Aorta (tissue), 5 donors: ENCODE measurements at regions of chr14 and their contacts with region 1.

Region 1: DNA sequence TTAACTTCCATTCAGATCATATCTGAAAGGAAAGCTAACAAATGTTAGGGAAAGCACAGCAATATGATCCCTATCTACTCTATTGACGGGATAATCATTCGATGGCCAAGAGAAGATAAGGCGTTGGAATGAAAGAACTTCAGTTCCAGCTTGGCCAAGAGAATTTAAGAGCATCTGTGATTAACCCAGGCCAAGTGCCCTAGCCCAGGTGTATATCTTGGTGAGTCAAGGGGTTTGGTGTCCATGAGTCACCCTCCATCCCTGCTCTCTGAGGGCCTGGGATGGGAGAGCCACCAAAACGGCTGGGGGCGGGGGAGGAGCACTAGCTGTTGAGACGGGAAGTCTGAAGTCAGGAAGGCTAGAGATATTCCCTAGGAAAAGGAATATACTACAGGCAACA is 13.0 kb downstream of the TBPL2 start:
- DNase-seq: no peak
- ATAC-seq: no peak
- H3K4me3 ChIP-seq: no peak overlapping the region
- H3K27ac ChIP-seq: no peak overlapping the region
- H3K4me1 ChIP-seq: no peaks in the 10 kb centered on the region
- H3K27me3 ChIP-seq: no peaks in the 10 kb centered on the region

Region 2: GRCh38 chr14:55212634-55213033 is 214.8 kb before region 1 on chr14:
- intact Hi-C with region 1: loop called (anchors 10 kb)
- DNase-seq: no peak
- ATAC-seq: no peak
- H3K4me3 ChIP-seq: no peak overlapping the region
- H3K27ac ChIP-seq: no peak overlapping the region
- H3K4me1 ChIP-seq: no peaks in the 10 kb centered on the region
- H3K27me3 ChIP-seq: peaks cover 0 to 2% of the 10 kb centered on the region in 2 donors

Region 3: GRCh38 chr14:55245657-55246268 is 181.6 kb before region 1 on chr14:
- intact Hi-C with region 1: loop called (anchors 5 to 10 kb)
- DNase-seq: no peak
- ATAC-seq: no peak
- H3K4me3 ChIP-seq: no peak overlapping the region
- H3K27ac ChIP-seq: no peak overlapping the region
- H3K4me1 ChIP-seq: no peaks in the 10 kb centered on the region
- H3K27me3 ChIP-seq: no peaks in the 10 kb centered on the region

Region 4: DNA sequence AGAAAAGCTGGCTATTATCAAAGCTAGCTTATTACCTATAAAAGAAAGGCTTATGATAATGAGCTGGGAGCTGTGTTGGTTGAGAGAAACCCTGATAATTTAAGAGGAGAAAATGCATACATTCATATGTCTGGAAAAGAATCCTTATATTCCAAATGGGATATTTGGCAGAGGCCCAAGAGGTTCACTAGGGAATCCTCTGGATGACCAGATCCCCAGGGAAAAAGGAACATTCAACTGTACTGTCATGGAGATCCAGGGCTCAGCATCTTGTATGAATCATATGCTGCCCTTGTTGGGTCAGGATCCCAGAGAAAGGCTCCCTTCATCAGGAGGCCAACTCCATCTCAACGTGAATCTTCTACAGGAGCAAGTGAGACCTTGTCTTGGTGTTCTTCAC is 172.8 kb before region 1 on chr14:
- intact Hi-C with region 1: loop called (anchors 5 to 10 kb)
- DNase-seq: no peak
- ATAC-seq: no peak
- H3K4me3 ChIP-seq: no peak overlapping the region
- H3K27ac ChIP-seq: no peak overlapping the region
- H3K4me1 ChIP-seq: no peaks in the 10 kb centered on the region
- H3K27me3 ChIP-seq: no peaks in the 10 kb centered on the region

Region 5: GRCh38 chr14:55386031-55386808 is 41.2 kb before region 1 on chr14:
- intact Hi-C with region 1: no loop called
- DNase-seq: no peak
- ATAC-seq: no peak
- H3K4me3 ChIP-seq: no peak overlapping the region
- H3K27ac ChIP-seq: peak overlapping the region in 1 of 2 donors; percentile 48
- H3K4me1 ChIP-seq: peaks cover 4 to 13% of the 10 kb centered on the region in 2 donors
- H3K27me3 ChIP-seq: no peaks in the 10 kb centered on the region